ENCODE measurements at regions of chr3 and their contacts with region 1.

Region 1: GRCh38 chr3:139353920-139354556 is 10.2 kb downstream of the MRPS22 start:
- H3K4me3 ChIP-seq: no peak overlapping the region
- H3K27ac ChIP-seq: no peak overlapping the region
- H3K4me1 ChIP-seq: no peaks in the 10 kb centered on the region
- CTCF ChIP-seq: peak; percentile 50

Region 2: GRCh38 chr3:139364549-139364948 is 10.5 kb after region 1 on chr3:
- CTCF ChIA-PET with region 1: interaction called, 10 read pairs
- POLR2A ChIA-PET with region 1: no interaction called
- H3K4me3 ChIP-seq: no peak overlapping the region
- H3K27ac ChIP-seq: no peak overlapping the region
- H3K4me1 ChIP-seq: no peaks in the 10 kb centered on the region
- CTCF ChIP-seq: no peak

Region 3: GRCh38 chr3:139374099-139374498 is 20.1 kb after region 1 on chr3:
- CTCF ChIA-PET with region 1: interaction called, 11 read pairs
- POLR2A ChIA-PET with region 1: no interaction called
- H3K4me3 ChIP-seq: no peak overlapping the region
- H3K27ac ChIP-seq: no peak overlapping the region
- H3K4me1 ChIP-seq: peaks cover 4% of the 10 kb centered on the region; the same call in 1 of the 2 replicates
- CTCF ChIP-seq: no peak